Calu3 (cell line): ENCODE measurements at regions of chr1 and their contacts with region 1.

Region 1: GRCh38 chr1:51768971-51769588 is 109.4 kb downstream of the NRDC start:
- DNase-seq: peak; percentile 13
- H3K4me3 Mint-ChIP-seq: no peak overlapping the region
- H3K27ac Mint-ChIP-seq: peak overlapping the region; percentile 47
- H3K4me1 Mint-ChIP-seq: peaks cover 9% of the 10 kb centered on the region
- H3K27me3 Mint-ChIP-seq: no peaks in the 10 kb centered on the region
- CTCF ChIP-seq: peak; percentile 73

Region 2: DNA sequence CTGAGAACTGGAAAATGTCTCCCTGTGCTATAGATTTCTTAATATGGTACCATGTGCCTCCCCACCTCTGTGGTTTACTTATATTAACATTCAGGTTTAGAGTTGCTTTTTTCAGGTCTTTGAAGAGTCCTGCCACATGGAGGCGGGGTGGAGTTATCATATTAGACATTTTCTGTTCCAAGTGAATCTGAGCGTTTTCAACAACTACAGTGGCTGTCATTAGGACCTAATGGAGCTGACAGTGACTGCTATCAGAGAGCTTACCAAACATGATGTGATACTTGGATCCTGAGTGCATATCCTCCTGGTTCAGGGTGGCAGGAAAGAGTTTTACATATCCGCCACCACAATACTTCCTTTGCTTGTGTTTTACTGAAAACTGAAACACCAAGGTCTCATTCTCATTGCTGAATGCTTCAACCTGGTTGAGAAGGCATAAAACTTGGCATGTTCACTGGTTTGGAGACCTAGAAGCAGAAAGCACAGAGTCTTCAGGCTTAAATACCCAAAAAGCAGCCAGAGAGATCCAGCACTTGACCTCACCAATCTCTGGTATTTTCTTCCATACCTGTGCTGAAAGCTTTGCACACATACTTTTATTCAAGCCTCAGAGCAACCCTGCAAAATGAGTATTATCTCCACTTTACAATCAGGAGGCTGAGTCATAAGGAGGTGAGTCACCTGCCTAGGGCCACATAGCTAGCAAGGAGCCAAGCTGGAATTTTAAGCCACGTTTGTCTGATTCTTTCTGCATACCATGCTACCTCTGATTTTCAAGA is 199.6 kb before region 1 on chr1:
- CTCF ChIA-PET with region 1: no interaction called
- intact Hi-C with region 1: loop called (anchors 2 kb)
- DNase-seq: peak; percentile 78
- H3K4me3 Mint-ChIP-seq: no peak overlapping the region
- H3K27ac Mint-ChIP-seq: peak overlapping the region; percentile 89
- H3K4me1 Mint-ChIP-seq: peaks cover 37% of the 10 kb centered on the region
- H3K27me3 Mint-ChIP-seq: no peaks in the 10 kb centered on the region
- CTCF ChIP-seq: peak; percentile 20

Region 3: DNA sequence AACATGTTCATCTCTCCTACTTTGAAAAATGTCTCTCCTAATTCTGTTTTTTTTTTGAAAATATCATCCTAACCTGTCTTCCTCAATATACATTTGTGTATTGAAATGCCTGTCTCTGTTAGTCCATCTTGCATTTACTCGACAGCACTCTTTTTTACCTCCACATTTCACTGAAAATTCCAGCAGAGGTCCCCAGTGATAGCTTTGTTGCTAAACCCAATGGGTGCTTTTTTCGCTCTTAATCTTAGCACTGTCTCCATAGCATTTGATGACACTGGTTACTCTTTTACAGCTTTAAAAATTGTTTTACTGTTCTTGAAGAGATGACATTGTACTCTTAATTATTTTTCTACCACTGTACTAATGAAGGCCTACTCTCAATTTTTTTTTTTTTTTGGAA is 141.4 kb before region 1 on chr1:
- CTCF ChIA-PET with region 1: interaction called, 5 read pairs
- intact Hi-C with region 1: loop called (anchors 1 kb)
- DNase-seq: no peak
- H3K4me3 Mint-ChIP-seq: no peak overlapping the region
- H3K27ac Mint-ChIP-seq: no peak overlapping the region
- H3K4me1 Mint-ChIP-seq: peaks cover 17% of the 10 kb centered on the region
- H3K27me3 Mint-ChIP-seq: no peaks in the 10 kb centered on the region
- CTCF ChIP-seq: no peak

Region 4: GRCh38 chr1:51661081-51661518 is 108.0 kb before region 1 on chr1:
- CTCF ChIA-PET with region 1: interaction called, 10 read pairs
- intact Hi-C with region 1: loop called (anchors 1 kb)
- DNase-seq: no peak
- H3K4me3 Mint-ChIP-seq: no peak overlapping the region
- H3K27ac Mint-ChIP-seq: peak overlapping the region; percentile 76
- H3K4me1 Mint-ChIP-seq: peaks cover 29% of the 10 kb centered on the region
- H3K27me3 Mint-ChIP-seq: no peaks in the 10 kb centered on the region
- CTCF ChIP-seq: no peak